ENCODE measurements at regions of chr22 and their contacts with region 1.

Region 1: DNA sequence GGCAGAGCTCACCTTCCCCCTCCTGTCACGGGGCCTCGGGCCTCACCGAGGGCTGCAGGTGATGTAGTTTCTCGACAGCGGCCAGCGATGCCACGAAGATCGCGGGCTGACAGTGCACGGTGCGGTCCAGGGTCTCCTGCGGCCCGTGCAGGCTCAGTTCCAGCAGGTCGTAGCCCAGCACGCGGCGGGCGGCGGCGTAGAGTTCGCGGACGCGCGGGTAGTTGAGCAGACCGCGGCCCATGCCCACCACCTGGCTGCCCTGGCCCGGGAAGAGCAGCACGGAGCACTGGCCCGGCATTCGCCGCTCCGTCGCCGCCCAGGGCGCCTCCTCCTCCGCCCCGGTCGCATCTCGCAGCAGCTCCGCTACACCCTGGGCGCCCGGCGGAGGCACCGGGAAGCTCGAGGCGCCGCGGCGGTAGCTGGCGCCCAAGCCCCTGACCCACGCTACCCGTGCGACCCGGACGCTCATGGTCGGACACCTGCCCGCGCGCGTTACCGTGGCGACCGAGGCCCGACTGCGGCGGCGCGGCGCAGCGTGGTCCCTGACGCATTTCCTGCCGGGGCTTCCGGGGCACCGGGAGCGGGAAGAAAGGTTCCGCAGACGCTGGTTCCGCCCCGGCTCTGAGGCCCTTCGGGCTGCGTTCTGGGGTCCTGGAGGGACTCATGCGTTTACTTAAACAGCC is at the start of gene MCAT:
- DNase-seq: peak; percentile 72 to 75
- ATAC-seq: peak; percentile 95 to 97
- H3K4me3 ChIP-seq: peak within 1 kb of the TSS; percentile 78 to 99 (median 90)
- H3K27ac ChIP-seq: peak within 1 kb of the TSS; percentile 72 to 84 (median 72)
- H3K4me1 ChIP-seq: peaks cover 9 to 17% of the 10 kb centered on the region in 2 donors
- H3K27me3 ChIP-seq: no peaks in the 10 kb centered on the region
- CTCF ChIP-seq: no peak
- POLR2A ChIP-seq: peak; percentile 49 to 56
- total RNA-seq, gene MCAT: 18.2 to 33.7 (median 31.1) TPM

Region 2: DNA sequence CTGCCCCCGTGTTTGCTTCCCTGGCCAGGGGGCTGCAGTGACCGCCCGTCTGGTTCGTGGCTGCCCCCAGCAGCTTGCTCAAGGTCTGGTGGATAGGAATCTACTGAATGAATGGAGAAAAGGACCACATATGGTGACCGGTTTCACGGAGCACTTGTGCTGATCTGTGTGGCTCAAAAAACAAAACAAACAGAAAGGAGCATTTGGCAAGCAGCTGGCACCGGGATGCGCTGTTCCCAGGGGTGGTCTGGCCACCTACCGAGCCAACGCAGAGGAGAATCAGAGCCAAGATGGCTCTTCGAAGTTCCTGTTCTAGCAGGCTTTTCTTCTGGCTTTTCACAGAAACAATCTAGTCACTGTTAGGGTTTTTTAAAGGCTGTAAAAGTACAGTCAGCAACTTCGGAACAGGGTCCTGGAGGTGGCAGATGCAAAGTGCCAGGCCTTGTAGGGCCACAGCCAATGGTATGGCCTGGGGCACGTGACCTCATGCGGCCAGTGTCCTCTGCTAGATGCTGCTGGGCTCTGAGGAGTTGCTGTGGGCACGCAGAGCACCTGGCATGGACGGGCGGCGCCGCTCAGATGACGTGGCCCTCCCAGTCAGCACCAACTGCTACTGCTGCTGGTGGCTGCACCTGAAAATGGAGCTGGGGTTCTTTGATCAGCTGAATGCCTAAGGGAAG is 100.8 kb before region 1 on chr22:
- in situ Hi-C with region 1: no loop called
- intact Hi-C with region 1: no loop called
- DNase-seq: peak in 1 of 2 donors; percentile 27
- ATAC-seq: peak in 1 of 2 donors; percentile 64
- H3K4me3 ChIP-seq: no peak overlapping the region
- H3K27ac ChIP-seq: no peak overlapping the region
- H3K4me1 ChIP-seq: no peaks in the 10 kb centered on the region
- H3K27me3 ChIP-seq: no peaks in the 10 kb centered on the region
- CTCF ChIP-seq: no peak
- POLR2A ChIP-seq: no peak

Region 3: GRCh38 chr22:43066844-43067385 is 76.1 kb before region 1 on chr22:
- in situ Hi-C with region 1: no loop called
- intact Hi-C with region 1: no loop called
- DNase-seq: no peak
- ATAC-seq: peak in 1 of 2 donors; percentile 67
- H3K4me3 ChIP-seq: no peak overlapping the region
- H3K27ac ChIP-seq: no peak overlapping the region
- H3K4me1 ChIP-seq: no peaks in the 10 kb centered on the region
- H3K27me3 ChIP-seq: no peaks in the 10 kb centered on the region
- CTCF ChIP-seq: no peak
- POLR2A ChIP-seq: no peak

Region 4: GRCh38 chr22:43187171-43188099 is 44.4 kb after region 1 on chr22:
- in situ Hi-C with region 1: no loop called
- intact Hi-C with region 1: loop called (anchors 2 kb)
- DNase-seq: peak; percentile 84 to 94
- ATAC-seq: peak; percentile 83 to 88
- H3K4me3 ChIP-seq: peak overlapping the region; percentile 56 to 66 (median 62)
- H3K27ac ChIP-seq: peak overlapping the region; percentile 77 to 87 (median 80)
- H3K4me1 ChIP-seq: peaks cover 10 to 12% of the 10 kb centered on the region in 2 donors
- H3K27me3 ChIP-seq: no peaks in the 10 kb centered on the region
- CTCF ChIP-seq: peak; percentile 55 to 81 (median 75)
- POLR2A ChIP-seq: peak; percentile 37 to 45

Region 5: DNA sequence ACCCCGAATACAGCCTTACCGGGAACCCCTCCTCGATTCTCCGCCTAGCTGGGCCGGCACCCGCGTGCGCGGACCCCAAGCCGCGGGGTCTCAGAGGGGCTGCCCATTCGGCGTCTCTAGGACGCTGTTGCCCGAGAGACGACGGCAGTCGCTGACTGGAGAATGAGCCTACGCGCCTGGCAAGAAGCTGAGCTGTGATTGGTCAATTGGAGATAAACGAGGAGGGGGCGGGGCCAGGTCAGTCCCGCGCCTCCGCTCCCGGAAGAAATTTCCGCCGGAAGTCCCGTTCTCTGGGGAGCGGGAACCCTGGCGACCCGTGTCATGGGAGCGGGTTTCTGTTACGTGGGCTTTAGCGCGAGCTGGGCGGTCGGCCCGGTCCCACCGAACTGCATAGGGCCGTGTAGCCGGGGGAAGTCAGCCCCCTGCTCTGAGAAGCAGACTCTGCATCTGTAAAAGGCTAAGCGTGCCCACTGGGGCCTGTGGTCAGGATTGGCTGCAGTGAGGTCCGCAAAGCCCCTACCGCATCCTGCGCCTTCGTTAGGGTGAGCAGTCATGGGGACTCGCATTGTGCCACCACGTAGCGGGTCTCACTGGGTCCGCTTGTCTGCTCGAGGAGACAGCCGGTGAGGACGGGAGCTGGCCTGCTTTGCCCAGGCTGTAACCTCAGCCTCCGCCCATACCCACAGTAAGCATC is 669.3 kb after region 1 on chr22 and contains the start of gene EFCAB6:
- in situ Hi-C with region 1: no loop called
- intact Hi-C with region 1: loop called (anchors 10 kb)
- DNase-seq: peak; percentile 89 to 91
- ATAC-seq: peak; percentile 98 to 99
- H3K4me3 ChIP-seq: peak within 1 kb of the TSS; percentile 76 to 94 (median 90)
- H3K27ac ChIP-seq: peak within 1 kb of the TSS; percentile 70 to 82 (median 80)
- H3K4me1 ChIP-seq: peaks cover 9 to 18% of the 10 kb centered on the region in 2 donors
- H3K27me3 ChIP-seq: no peaks in the 10 kb centered on the region
- CTCF ChIP-seq: no peak
- POLR2A ChIP-seq: peak; percentile 34 to 39
- total RNA-seq, gene EFCAB6: 0.07 to 4.4 (median 0.28) TPM

Measured in gastrocnemius medialis (tissue), 4 donors.